H1 (cell line): ENCODE measurements at regions of chr15 and their contacts with region 1.

Region 1: GRCh38 chr15:73368301-73369136 is at the start of gene HCN4:
- DNase-seq: peak in 1 of 2 experiments; percentile 85
- H3K4me3 ChIP-seq: peak within 1 kb of the TSS; percentile 68 to 84 (median 76)
- H3K27ac ChIP-seq: no peak within 1 kb of the TSS; the same call in 1 of the 2 replicates
- H3K4me1 ChIP-seq: peaks cover 15 to 51% (median 24%) of the 10 kb centered on the region in 4 experiments
- H3K27me3 ChIP-seq: peaks cover 0 to 26% (median 20%) of the 10 kb centered on the region in 4 experiments; a peak in 6 of 7 replicates
- CTCF ChIP-seq: 0 out of 4 replicates have a peak, but pooled peaks of 1 of the 3 experiments have one; percentile 4
- EP300 ChIP-seq: no peak
- POLR2A ChIP-seq: peak in 1 of 2 experiments; percentile 44; a peak in 2 of 3 replicates
- RAD21 ChIP-seq: no peak; a peak in 1 of 4 replicates
- total RNA-seq, gene HCN4: 8.5 and 9.3 TPM in 2 replicates

Region 2: GRCh38 chr15:73291441-73291840 is 77.1 kb before region 1 on chr15:
- CTCF ChIA-PET with region 1: no interaction called
- POLR2A ChIA-PET with region 1: no interaction called
- DNase-seq: no peak
- H3K4me3 ChIP-seq: no peak overlapping the region
- H3K27ac ChIP-seq: no peak overlapping the region
- H3K4me1 ChIP-seq: no peaks in the 10 kb centered on the region
- H3K27me3 ChIP-seq: no peaks in the 10 kb centered on the region
- CTCF ChIP-seq: no peak
- EP300 ChIP-seq: no peak
- POLR2A ChIP-seq: no peak
- RAD21 ChIP-seq: no peak

Region 3: GRCh38 chr15:73346735-73347312 is 21.7 kb before region 1 on chr15:
- CTCF ChIA-PET with region 1: interaction called, 10 read pairs
- POLR2A ChIA-PET with region 1: interaction called, 5 read pairs
- DNase-seq: peak; percentile 34 to 91
- H3K4me3 ChIP-seq: no peak overlapping the region
- H3K27ac ChIP-seq: no peak overlapping the region
- H3K4me1 ChIP-seq: peaks cover 0 to 7% (median 3%) of the 10 kb centered on the region in 4 experiments; a peak in 6 of 7 replicates
- H3K27me3 ChIP-seq: no peaks in the 10 kb centered on the region
- CTCF ChIP-seq: no peak
- EP300 ChIP-seq: no peak
- POLR2A ChIP-seq: no peak
- RAD21 ChIP-seq: peak in 1 of 2 experiments; percentile 26; a peak in 1 of 4 replicates

Region 4: DNA sequence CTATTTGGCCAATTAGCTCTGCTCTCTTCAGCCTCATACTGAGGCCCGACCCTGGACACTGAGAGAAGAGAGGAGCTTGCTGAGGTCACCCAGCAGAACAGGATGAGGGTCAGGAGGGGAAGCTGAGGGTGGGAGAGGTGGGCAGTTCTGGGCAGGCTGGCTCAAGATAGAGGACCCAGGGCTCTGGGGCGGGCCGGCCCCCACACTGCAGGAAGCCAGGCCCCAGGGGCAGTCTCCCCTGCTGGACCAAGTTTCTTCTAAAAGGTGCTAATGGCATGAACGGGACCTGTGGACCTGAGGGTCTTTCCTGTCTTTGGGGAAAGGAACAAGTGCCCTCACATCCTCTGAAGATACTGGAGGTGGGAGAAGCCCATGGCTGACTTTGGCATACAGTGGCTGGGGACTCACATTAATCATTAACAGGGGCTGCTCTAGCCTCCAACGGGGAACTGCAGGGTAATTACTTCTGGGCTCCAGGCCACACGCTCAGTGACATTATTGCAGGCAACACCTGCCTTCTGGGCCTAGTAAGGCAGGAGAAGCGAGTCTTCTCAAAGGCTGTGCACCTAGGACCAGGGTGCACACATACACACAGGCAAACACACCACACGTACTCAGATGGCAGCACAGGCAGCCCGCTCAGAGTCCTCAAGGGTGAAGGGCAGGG is 10.4 kb before region 1 on chr15:
- CTCF ChIA-PET with region 1: interaction called, 3 read pairs
- POLR2A ChIA-PET with region 1: interaction called, 17 read pairs
- DNase-seq: no peak
- H3K4me3 ChIP-seq: no peak overlapping the region
- H3K27ac ChIP-seq: no peak overlapping the region
- H3K4me1 ChIP-seq: peaks cover 6 to 25% (median 18%) of the 10 kb centered on the region in 4 experiments
- H3K27me3 ChIP-seq: no peaks in the 10 kb centered on the region
- CTCF ChIP-seq: no peak
- EP300 ChIP-seq: no peak
- POLR2A ChIP-seq: no peak
- RAD21 ChIP-seq: no peak

Region 5: GRCh38 chr15:73403171-73403570 is 34.7 kb after region 1 on chr15:
- CTCF ChIA-PET with region 1: no interaction called
- POLR2A ChIA-PET with region 1: no interaction called
- DNase-seq: no peak
- H3K4me3 ChIP-seq: no peak overlapping the region
- H3K27ac ChIP-seq: no peak overlapping the region
- H3K4me1 ChIP-seq: peaks cover 0 to 3% (median under 1%) of the 10 kb centered on the region in 4 experiments; a peak in 2 of 7 replicates
- H3K27me3 ChIP-seq: no peaks in the 10 kb centered on the region
- CTCF ChIP-seq: no peak
- EP300 ChIP-seq: no peak
- POLR2A ChIP-seq: no peak
- RAD21 ChIP-seq: no peak